Natural killer cell (primary cell): ENCODE measurements at regions of chr15 and their contacts with region 1.

Region 1: DNA sequence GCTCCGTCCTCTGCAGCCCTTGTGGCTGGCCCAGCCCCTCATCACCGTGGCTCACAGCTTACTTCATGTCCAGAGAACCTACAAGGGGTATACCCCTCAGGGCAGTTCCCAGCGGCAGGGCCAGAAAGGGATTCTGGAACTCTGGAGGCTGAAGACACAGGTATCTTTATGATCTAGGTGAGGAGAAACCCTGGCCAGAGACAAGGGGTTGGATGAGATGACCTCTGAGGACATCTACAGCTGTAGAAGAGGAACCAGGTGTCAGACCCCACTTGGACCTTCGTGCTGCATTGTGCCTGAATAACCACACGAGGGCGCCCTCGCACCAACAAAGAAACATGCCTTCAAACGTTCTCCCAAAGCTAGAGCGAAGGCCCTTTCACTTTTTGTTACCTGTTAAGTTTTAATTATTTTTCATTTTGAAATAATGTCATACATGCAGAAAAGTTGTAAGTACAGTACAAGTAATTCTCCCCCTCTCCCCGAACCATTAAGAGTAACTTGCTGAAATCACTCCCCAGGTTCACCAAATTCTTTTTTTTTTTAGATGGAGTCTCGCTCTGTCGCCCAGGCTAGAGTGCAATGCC is 118.7 kb upstream of the SMAD3 start:
- DNase-seq: peak; percentile 75 to 88
- ATAC-seq: peak; percentile 70 to 90 (median 86)
- H3K4me3 ChIP-seq: no peak overlapping the region
- H3K4me3 Mint-ChIP-seq: peak overlapping the region; percentile 17
- H3K27ac ChIP-seq: no peak overlapping the region
- H3K27ac Mint-ChIP-seq: no peak overlapping the region
- H3K4me1 ChIP-seq: no peaks in the 10 kb centered on the region
- H3K4me1 Mint-ChIP-seq: no peaks in the 10 kb centered on the region
- H3K27me3 ChIP-seq: no peaks in the 10 kb centered on the region
- H3K27me3 Mint-ChIP-seq: peaks cover 0 to 2% of the 10 kb centered on the region in 2 donors
- CTCF ChIP-seq: peak; percentile 94

Region 2: DNA sequence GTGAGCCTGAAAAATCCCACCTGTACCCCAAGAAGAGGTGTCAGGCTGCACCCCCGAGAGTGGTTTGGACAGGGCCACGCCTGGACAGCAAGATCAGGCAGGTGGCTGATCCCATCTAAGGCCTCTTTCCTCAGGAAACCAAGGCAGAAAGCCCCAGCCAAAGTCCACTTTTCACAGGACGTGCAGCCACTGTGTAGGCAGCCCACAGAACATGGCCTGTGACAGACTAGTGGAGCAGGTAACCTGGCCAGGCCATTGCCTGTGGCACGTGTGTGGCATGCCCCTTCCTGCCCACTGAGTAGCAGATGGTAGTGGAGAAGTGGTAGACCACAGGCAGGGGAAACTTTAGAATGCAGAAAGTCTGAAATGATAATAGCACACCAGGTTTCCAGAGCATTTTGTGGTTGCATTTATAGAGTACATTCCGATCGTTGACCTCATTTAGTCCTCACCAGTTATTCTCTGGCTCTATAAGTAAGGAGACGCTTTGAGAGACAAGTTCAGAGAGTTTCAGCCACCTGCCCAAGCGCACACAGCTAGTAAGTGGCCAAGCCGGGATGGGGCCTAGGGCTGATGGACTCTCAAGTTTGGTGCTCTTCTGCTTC is 239.1 kb after region 1 on chr15:
- intact Hi-C with region 1: loop called (anchors 2 kb)
- DNase-seq: peak in 1 of 2 donors; percentile 25
- ATAC-seq: peak; percentile 51 to 83 (median 77)
- H3K4me3 ChIP-seq: no peak overlapping the region
- H3K4me3 Mint-ChIP-seq: no peak overlapping the region
- H3K27ac ChIP-seq: peak overlapping the region; percentile 21
- H3K27ac Mint-ChIP-seq: peak overlapping the region; percentile 69 to 80
- H3K4me1 ChIP-seq: peaks cover 21% of the 10 kb centered on the region
- H3K4me1 Mint-ChIP-seq: peaks cover 19 to 28% of the 10 kb centered on the region in 2 donors
- H3K27me3 ChIP-seq: no peaks in the 10 kb centered on the region
- H3K27me3 Mint-ChIP-seq: no peaks in the 10 kb centered on the region
- CTCF ChIP-seq: no peak

Region 3: DNA sequence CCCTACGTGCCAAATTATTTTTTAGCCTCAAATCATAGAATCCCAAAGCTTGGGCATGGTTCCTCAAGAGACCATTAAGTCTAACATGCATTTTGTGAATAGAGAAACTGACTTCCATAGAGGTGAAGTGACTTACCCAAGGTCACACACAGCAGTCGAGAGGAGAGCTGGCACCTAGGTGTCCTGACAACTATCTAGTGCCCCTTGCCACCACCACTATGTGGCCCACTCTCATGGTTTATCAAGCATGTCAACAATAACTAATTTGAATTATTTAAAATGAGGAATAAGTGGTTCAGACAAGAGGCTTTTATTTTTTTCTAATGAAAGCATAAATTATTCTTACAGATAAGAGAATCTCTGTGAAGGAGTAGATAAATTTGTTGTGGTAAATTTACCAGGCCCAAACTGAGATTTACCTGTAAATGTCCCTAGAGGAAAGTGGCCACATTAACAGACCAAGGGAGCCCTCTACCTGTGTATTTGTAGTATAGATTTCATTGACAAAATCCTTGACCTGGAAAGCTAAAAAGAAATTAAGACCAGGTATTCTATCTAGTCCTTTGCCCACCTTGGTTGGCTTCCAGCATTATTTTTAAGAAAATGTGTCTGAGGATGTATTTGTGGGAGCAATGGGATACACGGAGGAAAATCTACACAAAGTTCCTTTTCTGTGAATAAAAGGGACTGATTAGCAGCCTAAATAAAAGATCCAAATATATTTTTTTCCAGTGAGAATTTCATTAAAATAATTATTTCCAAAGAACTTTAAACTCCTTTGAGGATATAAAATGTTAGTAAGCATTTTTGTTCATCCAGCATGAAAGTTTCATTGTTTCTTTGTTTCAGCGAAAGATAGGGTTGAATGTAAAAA is 357.1 kb after region 1 on chr15:
- intact Hi-C with region 1: loop called (anchors 1 kb)
- DNase-seq: peak in 1 of 2 donors; percentile 75
- ATAC-seq: peak in 2 of 3 donors; percentile 38 to 57
- H3K4me3 ChIP-seq: no peak overlapping the region
- H3K4me3 Mint-ChIP-seq: no peak overlapping the region
- H3K27ac ChIP-seq: no peak overlapping the region
- H3K27ac Mint-ChIP-seq: no peak overlapping the region
- H3K4me1 ChIP-seq: no peaks in the 10 kb centered on the region
- H3K4me1 Mint-ChIP-seq: no peaks in the 10 kb centered on the region
- H3K27me3 ChIP-seq: no peaks in the 10 kb centered on the region
- H3K27me3 Mint-ChIP-seq: no peaks in the 10 kb centered on the region
- CTCF ChIP-seq: peak; percentile 71

Region 4: GRCh38 chr15:67433495-67434099 is 486.9 kb after region 1 on chr15:
- intact Hi-C with region 1: loop called (anchors 1 kb)
- DNase-seq: peak in 1 of 2 donors; percentile 39
- ATAC-seq: peak in 2 of 3 donors; percentile 42 to 49
- H3K4me3 ChIP-seq: no peak overlapping the region
- H3K4me3 Mint-ChIP-seq: no peak overlapping the region
- H3K27ac ChIP-seq: no peak overlapping the region
- H3K27ac Mint-ChIP-seq: no peak overlapping the region
- H3K4me1 ChIP-seq: no peaks in the 10 kb centered on the region
- H3K4me1 Mint-ChIP-seq: no peaks in the 10 kb centered on the region
- H3K27me3 ChIP-seq: no peaks in the 10 kb centered on the region
- H3K27me3 Mint-ChIP-seq: no peaks in the 10 kb centered on the region
- CTCF ChIP-seq: peak; percentile 67